Common myeloid progenitor, CD34-positive (primary cell): ENCODE measurements at regions of chr2 and their contacts with region 1.

Region 1: DNA sequence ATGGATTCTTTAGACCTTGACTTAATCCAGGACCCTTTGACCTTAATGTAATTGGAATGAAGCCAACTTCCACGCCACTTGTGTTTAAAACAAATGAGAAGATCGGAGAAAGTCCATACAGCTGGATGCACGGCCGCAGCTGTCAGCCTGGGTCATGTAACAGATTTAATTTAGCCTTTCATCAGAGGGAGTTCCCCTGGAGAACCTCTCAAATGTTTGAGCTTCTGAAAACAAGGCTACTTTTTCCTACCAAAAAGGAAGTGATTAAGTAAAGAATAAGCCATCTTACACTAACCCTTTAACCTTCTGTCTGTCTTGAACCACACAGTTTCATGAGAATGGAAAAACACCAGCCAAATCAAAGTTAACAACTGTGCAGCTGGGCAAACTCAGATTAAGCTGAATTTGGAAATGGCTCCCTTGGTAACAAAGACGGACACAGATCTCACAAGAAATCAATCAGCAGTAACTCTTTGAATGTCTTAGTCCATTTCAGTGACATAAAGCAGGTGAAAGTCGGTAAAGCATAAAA is 103.6 kb downstream of the DOCK10 start:
- DNase-seq: no peak
- H3K4me3 ChIP-seq: no peak overlapping the region
- H3K27ac ChIP-seq: no peak overlapping the region
- H3K4me1 ChIP-seq: peaks cover 10 to 28% (median 18%) of the 10 kb centered on the region in 4 experiments
- H3K27me3 ChIP-seq: no peaks in the 10 kb centered on the region

Region 2: DNA sequence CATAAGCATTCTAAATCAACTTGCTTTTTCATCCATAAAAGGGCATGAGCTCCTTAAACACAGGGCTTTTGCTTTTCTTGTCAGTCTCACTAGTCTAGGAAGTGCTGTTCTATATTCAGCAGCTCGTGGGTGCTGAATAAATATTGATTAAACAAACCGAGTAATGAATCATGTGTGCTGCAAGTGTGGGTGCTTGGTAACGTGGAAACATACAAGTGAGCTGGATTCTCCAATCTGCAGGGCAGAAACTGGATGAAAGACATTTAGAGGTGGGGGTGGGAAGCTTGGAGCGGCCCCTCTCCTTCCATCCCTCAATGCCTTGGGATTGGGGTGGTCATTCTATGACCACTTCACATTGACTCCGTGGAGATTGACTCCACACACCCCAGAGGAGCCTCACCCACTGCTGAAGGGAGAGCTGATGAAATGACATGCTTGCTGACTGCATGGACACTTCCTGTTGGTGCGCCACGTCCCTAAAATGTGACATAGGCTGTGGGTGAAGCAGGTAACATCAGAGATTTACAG is 11.0 kb before region 1 on chr2:
- CTCF ChIA-PET with region 1: interaction called, 13 read pairs
- POLR2A ChIA-PET with region 1: interaction called, 3 read pairs
- DNase-seq: peak in 2 of 3 donors; percentile 52 to 68
- H3K4me3 ChIP-seq: no peak overlapping the region
- H3K27ac ChIP-seq: no peak overlapping the region
- H3K4me1 ChIP-seq: peaks cover 57 to 96% (median 80%) of the 10 kb centered on the region in 4 experiments
- H3K27me3 ChIP-seq: no peaks in the 10 kb centered on the region